Naive thymus-derived CD4-positive, alpha-beta T cell (primary cell): ENCODE measurements at regions of chr2 and their contacts with region 1.

Region 1: GRCh38 chr2:70616168-70616694 is 62.6 kb upstream of the TGFA start:
- DNase-seq: no peak
- ATAC-seq: no peak
- H3K4me3 ChIP-seq: no peak overlapping the region
- H3K4me3 Mint-ChIP-seq: no peak overlapping the region
- H3K27ac ChIP-seq: no peak overlapping the region
- H3K27ac Mint-ChIP-seq: no peak overlapping the region
- H3K4me1 ChIP-seq: no peaks in the 10 kb centered on the region
- H3K4me1 Mint-ChIP-seq: peaks cover 0 to 2% (median 0%) of the 10 kb centered on the region in 7 donors
- H3K27me3 ChIP-seq: no peaks in the 10 kb centered on the region
- H3K27me3 Mint-ChIP-seq: peaks cover 0 to 17% (median 0%) of the 10 kb centered on the region in 5 donors

Region 2: DNA sequence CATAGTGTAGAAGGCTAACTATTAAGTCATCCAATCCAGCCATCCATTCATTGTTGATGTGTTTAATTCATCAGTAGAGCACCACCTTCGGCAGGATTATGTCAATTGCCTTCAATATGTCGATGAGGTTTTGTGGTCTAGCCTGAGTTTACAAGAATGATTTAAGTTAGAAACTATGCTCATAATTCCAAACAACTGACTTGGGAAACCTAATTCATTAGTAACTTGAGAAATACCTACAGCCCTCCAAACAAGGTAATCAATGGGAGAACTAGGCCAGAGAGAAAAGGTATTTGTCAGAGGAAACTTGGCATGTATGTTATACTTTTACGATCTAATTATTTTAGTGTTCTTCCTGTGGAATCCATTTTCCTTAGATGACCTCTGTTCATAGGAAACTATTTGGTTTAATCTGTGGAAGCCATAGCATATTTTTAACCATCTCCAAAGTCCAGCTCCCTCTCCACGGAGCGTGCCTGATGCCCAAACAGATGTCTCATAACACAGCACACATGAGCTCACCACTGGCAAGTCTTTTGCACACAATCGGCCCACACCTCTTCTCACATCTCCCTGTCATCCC is 1377.7 kb before region 1 on chr2:
- CTCF ChIA-PET with region 1: no interaction called
- POLR2A ChIA-PET with region 1: no interaction called
- intact Hi-C with region 1: no loop called
- DNase-seq: no peak
- ATAC-seq: no peak
- H3K4me3 ChIP-seq: no peak overlapping the region
- H3K4me3 Mint-ChIP-seq: no peak overlapping the region
- H3K27ac ChIP-seq: no peak overlapping the region
- H3K27ac Mint-ChIP-seq: no peak overlapping the region
- H3K4me1 ChIP-seq: no peaks in the 10 kb centered on the region
- H3K4me1 Mint-ChIP-seq: no peaks in the 10 kb centered on the region
- H3K27me3 ChIP-seq: no peaks in the 10 kb centered on the region
- H3K27me3 Mint-ChIP-seq: peaks cover 6 to 16% (median 9%) of the 10 kb centered on the region in 5 donors

Region 3: GRCh38 chr2:70340921-70341765 is 275.1 kb before region 1 on chr2:
- CTCF ChIA-PET with region 1: interaction called, 91 read pairs
- POLR2A ChIA-PET with region 1: interaction called, 5 read pairs
- intact Hi-C with region 1: loop called (anchors 1 kb)
- DNase-seq: peak; percentile 11 to 64 (median 45)
- ATAC-seq: peak; percentile 80
- H3K4me3 ChIP-seq: no peak overlapping the region
- H3K4me3 Mint-ChIP-seq: peak overlapping the region in 1 of 10 donors; percentile 27
- H3K27ac ChIP-seq: no peak overlapping the region
- H3K27ac Mint-ChIP-seq: no peak overlapping the region
- H3K4me1 ChIP-seq: peaks cover 0 to 8% of the 10 kb centered on the region in 2 donors
- H3K4me1 Mint-ChIP-seq: peaks cover 0 to 13% (median 11%) of the 10 kb centered on the region in 7 donors
- H3K27me3 ChIP-seq: no peaks in the 10 kb centered on the region
- H3K27me3 Mint-ChIP-seq: peaks cover 0 to 26% (median 0%) of the 10 kb centered on the region in 5 donors

Region 4: GRCh38 chr2:70603066-70603465 is 13.2 kb before region 1 on chr2:
- CTCF ChIA-PET with region 1: no interaction called
- POLR2A ChIA-PET with region 1: no interaction called
- intact Hi-C with region 1: no loop called
- DNase-seq: peak in 1 of 9 donors; percentile 4
- ATAC-seq: no peak
- H3K4me3 ChIP-seq: no peak overlapping the region
- H3K4me3 Mint-ChIP-seq: no peak overlapping the region
- H3K27ac ChIP-seq: no peak overlapping the region
- H3K27ac Mint-ChIP-seq: peak overlapping the region in 6 of 9 donors; percentile 2 to 68 (median 24)
- H3K4me1 ChIP-seq: no peaks in the 10 kb centered on the region
- H3K4me1 Mint-ChIP-seq: peaks cover 2 to 20% (median 13%) of the 10 kb centered on the region in 7 donors
- H3K27me3 ChIP-seq: no peaks in the 10 kb centered on the region
- H3K27me3 Mint-ChIP-seq: peaks cover 0 to 30% (median 0%) of the 10 kb centered on the region in 5 donors

Region 5: DNA sequence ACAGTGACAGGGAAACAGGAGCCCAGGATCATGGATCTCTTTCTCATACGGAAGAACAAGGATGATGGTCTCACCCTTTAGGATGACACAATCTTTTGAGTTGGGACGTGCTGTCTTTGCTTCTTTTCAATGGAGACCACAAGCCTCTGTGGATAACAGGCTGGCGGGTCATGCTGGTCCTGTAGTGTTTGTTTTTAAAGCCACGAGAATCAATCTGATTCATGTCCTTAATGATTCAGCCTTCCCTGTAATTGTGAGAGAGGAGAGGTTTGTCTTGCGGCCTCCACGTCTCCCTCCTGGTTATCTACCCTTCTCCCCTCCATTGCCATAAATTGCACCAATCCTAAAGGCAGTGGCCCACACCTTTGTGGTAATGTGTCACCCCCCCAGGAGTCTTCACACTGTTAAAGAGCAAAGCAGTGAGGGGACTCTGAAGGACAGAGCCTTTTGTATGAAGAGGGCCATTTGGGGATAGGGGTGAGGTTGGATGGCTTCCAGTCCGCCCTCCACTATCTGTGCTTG is 25.1 kb after region 1 on chr2:
- CTCF ChIA-PET with region 1: interaction called, 28 read pairs
- POLR2A ChIA-PET with region 1: interaction called, 4 read pairs
- intact Hi-C with region 1: no loop called
- DNase-seq: no peak
- ATAC-seq: no peak
- H3K4me3 ChIP-seq: no peak overlapping the region
- H3K4me3 Mint-ChIP-seq: peak overlapping the region in 4 of 10 donors; percentile 19 to 29 (median 24)
- H3K27ac ChIP-seq: no peak overlapping the region
- H3K27ac Mint-ChIP-seq: peak overlapping the region in 4 of 9 donors; percentile 28 to 81 (median 53)
- H3K4me1 ChIP-seq: peaks cover 0 to 26% of the 10 kb centered on the region in 2 donors
- H3K4me1 Mint-ChIP-seq: peaks cover 12 to 43% (median 37%) of the 10 kb centered on the region in 7 donors
- H3K27me3 ChIP-seq: no peaks in the 10 kb centered on the region
- H3K27me3 Mint-ChIP-seq: peaks cover 0 to 7% (median 0%) of the 10 kb centered on the region in 5 donors

Region 6: GRCh38 chr2:70647873-70648481 is 31.7 kb after region 1 on chr2:
- CTCF ChIA-PET with region 1: interaction called, 28 read pairs
- POLR2A ChIA-PET with region 1: no interaction called
- intact Hi-C with region 1: loop called in 1 of 2 experiments (anchors 1 kb)
- DNase-seq: peak; percentile 55 to 81 (median 75)
- ATAC-seq: peak; percentile 85
- H3K4me3 ChIP-seq: no peak overlapping the region
- H3K4me3 Mint-ChIP-seq: no peak overlapping the region
- H3K27ac ChIP-seq: no peak overlapping the region
- H3K27ac Mint-ChIP-seq: peak overlapping the region in 1 of 9 donors; percentile 13
- H3K4me1 ChIP-seq: no peaks in the 10 kb centered on the region
- H3K4me1 Mint-ChIP-seq: no peaks in the 10 kb centered on the region
- H3K27me3 ChIP-seq: no peaks in the 10 kb centered on the region
- H3K27me3 Mint-ChIP-seq: peaks cover 0 to 30% (median 4%) of the 10 kb centered on the region in 5 donors